ENCODE measurements at regions of chr15 and their contacts with region 1.

Region 1: DNA sequence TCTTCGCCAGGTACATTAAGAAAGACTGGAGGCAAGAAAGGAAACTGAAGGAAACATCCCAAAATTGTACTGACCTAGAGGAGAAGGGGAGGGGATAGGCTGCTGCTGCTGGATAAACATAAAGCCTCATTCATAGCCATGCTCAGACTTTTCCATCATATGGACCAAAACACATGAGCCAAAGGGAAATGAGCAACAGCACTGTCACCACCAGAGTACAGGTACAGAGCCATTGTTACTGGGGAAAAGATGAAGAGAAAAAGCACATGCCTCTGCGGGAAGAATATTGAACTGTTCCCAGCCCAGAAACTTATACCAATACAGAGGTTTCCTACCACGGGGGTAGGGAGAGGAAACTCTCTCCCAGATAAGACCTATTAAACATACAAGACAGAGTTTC is 861.9 kb downstream of the NTRK3 start:
- DNase-seq: no peak
- ATAC-seq: no peak
- H3K4me3 ChIP-seq: no peak overlapping the region
- H3K27ac ChIP-seq: no peak overlapping the region
- H3K4me1 ChIP-seq: no peaks in the 10 kb centered on the region
- H3K27me3 ChIP-seq: no peaks in the 10 kb centered on the region
- CTCF ChIP-seq: no peak
- POLR2A ChIP-seq: no peak

Region 2: GRCh38 chr15:87408902-87409301 is 14.2 kb after region 1 on chr15:
- intact Hi-C with region 1: no loop called
- DNase-seq: no peak
- ATAC-seq: no peak
- H3K4me3 ChIP-seq: no peak overlapping the region
- H3K27ac ChIP-seq: no peak overlapping the region
- H3K4me1 ChIP-seq: no peaks in the 10 kb centered on the region
- H3K27me3 ChIP-seq: no peaks in the 10 kb centered on the region
- CTCF ChIP-seq: no peak
- POLR2A ChIP-seq: no peak

Region 3: DNA sequence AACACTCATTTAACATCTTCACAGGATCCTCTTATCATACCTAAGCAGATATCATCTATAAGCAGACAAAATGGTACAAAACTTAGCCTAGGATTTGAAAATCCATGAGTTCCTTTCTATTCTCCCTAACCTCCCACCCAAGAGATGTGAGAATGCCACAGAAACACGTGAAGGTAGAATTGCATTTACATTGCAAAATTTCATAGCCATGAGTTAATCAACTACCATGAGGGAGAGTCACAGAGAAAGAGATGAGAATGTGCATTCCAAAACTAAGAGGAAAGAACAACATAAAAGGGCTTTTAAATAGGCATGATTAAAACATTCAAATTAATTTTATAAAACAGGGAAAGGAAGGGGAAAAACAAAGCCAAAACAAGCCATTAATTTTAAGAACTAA is 55.6 kb after region 1 on chr15:
- intact Hi-C with region 1: loop called in 1 of 10 experiments (anchors 10 kb)
- DNase-seq: no peak
- ATAC-seq: no peak
- H3K4me3 ChIP-seq: no peak overlapping the region
- H3K27ac ChIP-seq: no peak overlapping the region
- H3K4me1 ChIP-seq: no peaks in the 10 kb centered on the region
- H3K27me3 ChIP-seq: no peaks in the 10 kb centered on the region
- CTCF ChIP-seq: no peak
- POLR2A ChIP-seq: no peak